PC-9 (cell line): ENCODE measurements at regions of chr12 and their contacts with region 1.

Region 1: GRCh38 chr12:121765573-121765972 is 27.9 kb downstream of the RHOF start:
- DNase-seq: peak in 1 of 2 experiments; percentile 60
- H3K4me3 ChIP-seq: no peak overlapping the region
- H3K27ac ChIP-seq: no peak overlapping the region
- H3K4me1 ChIP-seq: peaks cover 5% of the 10 kb centered on the region; the same call in 1 of the 2 replicates
- H3K27me3 ChIP-seq: no peaks in the 10 kb centered on the region
- CTCF ChIP-seq: no peak

Region 2: GRCh38 chr12:121423682-121424623 is 341.6 kb before region 1 on chr12:
- CTCF ChIA-PET with region 1: no interaction called
- POLR2A ChIA-PET with region 1: no interaction called
- intact Hi-C with region 1: no loop called
- DNase-seq: no peak
- H3K4me3 ChIP-seq: no peak overlapping the region
- H3K27ac ChIP-seq: no peak overlapping the region
- H3K4me1 ChIP-seq: no peaks in the 10 kb centered on the region
- H3K27me3 ChIP-seq: no peaks in the 10 kb centered on the region
- CTCF ChIP-seq: no peak

Region 3: GRCh38 chr12:121786441-121786825 is 20.9 kb after region 1 on chr12:
- CTCF ChIA-PET with region 1: no interaction called
- POLR2A ChIA-PET with region 1: interaction called, 23 read pairs
- intact Hi-C with region 1: no loop called
- DNase-seq: peak; percentile 96 to 98
- H3K4me3 ChIP-seq: no peak overlapping the region
- H3K27ac ChIP-seq: peak overlapping the region; percentile 100
- H3K4me1 ChIP-seq: peaks cover 88% of the 10 kb centered on the region
- H3K27me3 ChIP-seq: no peaks in the 10 kb centered on the region
- CTCF ChIP-seq: no peak

Region 4: GRCh38 chr12:122500685-122501488 is 735.3 kb after region 1 on chr12 and contains the start of gene ZCCHC8:
- CTCF ChIA-PET with region 1: no interaction called
- POLR2A ChIA-PET with region 1: interaction called, 17 read pairs
- intact Hi-C with region 1: no loop called
- DNase-seq: peak; percentile 94 to 95
- H3K4me3 ChIP-seq: peak within 1 kb of the TSS; percentile 86
- H3K27ac ChIP-seq: peak within 1 kb of the TSS; percentile 91
- H3K4me1 ChIP-seq: peaks cover 23% of the 10 kb centered on the region; the same call in 1 of the 2 replicates
- H3K27me3 ChIP-seq: no peaks in the 10 kb centered on the region
- CTCF ChIP-seq: no peak
- total RNA-seq, gene ZCCHC8: 16.7 and 24.3 TPM in 2 replicates